ENCODE measurements at regions of chr21 and their contacts with region 1.

Region 1: GRCh38 chr21:33324291-33325221 is at the start of gene IFNAR1:
- DNase-seq: peak; percentile 97 to 100 (median 98)
- ATAC-seq: peak; percentile 98
- H3K4me3 ChIP-seq: peak within 1 kb of the TSS; percentile 71
- H3K4me1 ChIP-seq: peaks cover 15% of the 10 kb centered on the region
- CTCF ChIP-seq: no peak
- total RNA-seq, gene IFNAR1: 41.9 to 49.5 (median 43.3) TPM

Region 2: GRCh38 chr21:33360881-33361602 is 36.5 kb after region 1 on chr21:
- intact Hi-C with region 1: loop called in 1 of 2 experiments (anchors 5 kb)
- DNase-seq: peak; percentile 85 to 93 (median 92)
- ATAC-seq: peak; percentile 90
- H3K4me3 ChIP-seq: no peak overlapping the region
- H3K4me1 ChIP-seq: peaks cover 15% of the 10 kb centered on the region
- CTCF ChIP-seq: peak; percentile 49

Region 3: DNA sequence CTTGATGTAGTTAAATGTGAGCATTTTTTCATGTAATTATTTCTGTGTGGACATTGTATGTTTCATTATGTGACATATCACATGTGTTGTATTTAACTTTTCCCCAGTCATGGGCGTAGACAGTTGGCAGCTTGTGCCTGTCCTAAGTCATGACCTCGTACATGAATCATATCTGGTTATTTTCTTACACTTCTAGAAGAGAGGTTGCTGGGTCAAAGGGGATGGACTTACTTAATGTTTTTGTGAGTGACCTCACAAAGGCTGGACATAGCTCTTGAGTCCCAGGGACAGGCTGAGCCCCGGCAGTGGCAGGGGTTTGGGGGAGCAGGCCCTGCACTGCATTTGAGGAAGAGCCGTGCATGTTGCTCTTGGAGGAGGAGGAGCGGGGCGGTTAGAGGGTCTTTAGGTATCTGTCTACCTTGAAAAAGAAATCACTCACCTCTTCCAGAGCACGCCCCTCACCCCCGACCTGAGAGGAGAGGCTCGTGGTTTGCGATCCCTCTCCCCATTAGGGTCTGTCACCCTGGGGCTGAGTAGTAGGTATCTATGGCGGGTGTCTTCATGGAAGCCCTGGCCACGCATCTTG is 95.1 kb after region 1 on chr21:
- intact Hi-C with region 1: no loop called
- DNase-seq: no peak
- ATAC-seq: peak; percentile 61
- H3K4me3 ChIP-seq: no peak overlapping the region
- H3K4me1 ChIP-seq: peaks cover 7% of the 10 kb centered on the region
- CTCF ChIP-seq: no peak

Region 4: DNA sequence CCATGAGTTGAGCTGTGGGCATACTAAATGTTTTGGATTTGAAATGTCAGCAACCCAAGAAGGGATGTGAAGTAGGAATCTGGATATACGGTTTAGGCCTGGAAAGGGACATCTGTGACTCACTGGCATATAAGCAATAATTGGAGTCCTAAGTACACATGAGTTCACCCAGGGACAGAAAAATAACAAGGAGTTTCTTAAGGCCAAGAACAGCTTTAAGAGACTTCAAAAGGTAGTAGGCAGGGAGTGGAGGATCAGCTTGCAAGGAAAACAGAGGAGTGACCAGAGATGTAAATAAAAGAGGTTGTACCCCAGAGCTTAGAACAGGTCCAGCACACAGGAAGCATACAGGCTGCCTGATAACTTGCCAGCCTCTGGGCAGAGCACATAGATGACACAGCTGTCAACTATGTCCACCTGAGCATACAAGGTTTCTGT is 127.1 kb after region 1 on chr21:
- intact Hi-C with region 1: no loop called
- DNase-seq: no peak
- ATAC-seq: peak; percentile 93
- H3K4me3 ChIP-seq: no peak overlapping the region
- H3K4me1 ChIP-seq: peaks cover 6% of the 10 kb centered on the region
- CTCF ChIP-seq: no peak

Measured in mucosa of descending colon (tissue), 3 donors.